MCF 10A (cell line): ENCODE measurements at regions of chr21 and their contacts with region 1.

Region 1: DNA sequence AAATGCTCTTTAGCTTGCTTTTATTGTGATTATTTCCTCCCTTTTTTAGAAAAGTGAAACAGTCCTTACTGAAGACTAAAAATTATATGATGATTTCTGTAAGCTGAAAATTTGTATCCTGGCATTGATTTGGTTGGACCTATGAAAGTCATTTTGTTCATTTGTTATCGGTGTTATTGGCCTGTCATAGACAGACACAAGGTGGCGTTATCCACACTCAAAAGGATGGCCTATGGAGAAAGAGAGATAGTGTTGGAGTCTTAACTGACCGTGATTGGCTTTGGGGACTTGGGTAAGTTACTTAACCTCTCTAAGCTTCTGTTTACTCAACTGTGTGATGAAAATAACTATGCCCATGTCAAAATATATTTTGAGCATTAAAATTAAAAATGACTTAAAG is 203.6 kb upstream of the CHODL start:
- DNase-seq: peak; percentile 73
- H3K4me3 Mint-ChIP-seq: no peak overlapping the region
- H3K27ac Mint-ChIP-seq: no peak overlapping the region
- H3K4me1 Mint-ChIP-seq: no peaks in the 10 kb centered on the region
- H3K27me3 Mint-ChIP-seq: no peaks in the 10 kb centered on the region
- CTCF ChIP-seq: peak; percentile 53

Region 2: GRCh38 chr21:18030248-18030647 is 10.8 kb before region 1 on chr21:
- CTCF ChIA-PET with region 1: interaction called, 14 read pairs
- POLR2A ChIA-PET with region 1: no interaction called
- intact Hi-C with region 1: no loop called
- DNase-seq: peak; percentile 1
- H3K4me3 Mint-ChIP-seq: no peak overlapping the region
- H3K27ac Mint-ChIP-seq: no peak overlapping the region
- H3K4me1 Mint-ChIP-seq: no peaks in the 10 kb centered on the region
- H3K27me3 Mint-ChIP-seq: no peaks in the 10 kb centered on the region
- CTCF ChIP-seq: no peak

Region 3: GRCh38 chr21:18153063-18153462 is 112.1 kb after region 1 on chr21:
- CTCF ChIA-PET with region 1: interaction called, 11 read pairs
- POLR2A ChIA-PET with region 1: interaction called, 3 read pairs
- intact Hi-C with region 1: no loop called
- DNase-seq: peak; percentile 53
- H3K4me3 Mint-ChIP-seq: no peak overlapping the region
- H3K27ac Mint-ChIP-seq: no peak overlapping the region
- H3K4me1 Mint-ChIP-seq: peaks cover 7% of the 10 kb centered on the region
- H3K27me3 Mint-ChIP-seq: no peaks in the 10 kb centered on the region
- CTCF ChIP-seq: no peak

Region 4: DNA sequence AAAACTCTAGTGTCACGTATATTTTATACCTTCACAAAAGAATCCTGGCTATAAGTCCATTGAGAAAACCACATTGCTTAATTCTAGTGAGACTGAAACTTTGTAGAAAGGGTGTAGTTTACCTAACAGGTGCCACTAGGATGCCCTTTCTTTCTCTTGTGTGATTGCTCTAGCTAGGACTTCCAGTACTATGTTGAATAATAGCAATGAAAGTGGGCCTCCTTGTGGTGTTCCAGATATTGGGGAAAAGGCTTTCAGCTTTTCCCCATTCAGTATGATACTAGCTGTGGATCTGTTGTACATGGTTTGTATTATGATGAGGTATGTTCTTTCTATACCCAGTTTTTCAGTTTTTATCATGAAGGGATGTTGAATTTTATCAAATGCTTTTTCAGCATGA is 163.9 kb after region 1 on chr21:
- CTCF ChIA-PET with region 1: interaction called, 4 read pairs
- POLR2A ChIA-PET with region 1: no interaction called
- intact Hi-C with region 1: loop called (anchors 2 kb)
- DNase-seq: peak; percentile 5
- H3K4me3 Mint-ChIP-seq: no peak overlapping the region
- H3K27ac Mint-ChIP-seq: no peak overlapping the region
- H3K4me1 Mint-ChIP-seq: no peaks in the 10 kb centered on the region
- H3K27me3 Mint-ChIP-seq: no peaks in the 10 kb centered on the region
- CTCF ChIP-seq: no peak

Region 5: DNA sequence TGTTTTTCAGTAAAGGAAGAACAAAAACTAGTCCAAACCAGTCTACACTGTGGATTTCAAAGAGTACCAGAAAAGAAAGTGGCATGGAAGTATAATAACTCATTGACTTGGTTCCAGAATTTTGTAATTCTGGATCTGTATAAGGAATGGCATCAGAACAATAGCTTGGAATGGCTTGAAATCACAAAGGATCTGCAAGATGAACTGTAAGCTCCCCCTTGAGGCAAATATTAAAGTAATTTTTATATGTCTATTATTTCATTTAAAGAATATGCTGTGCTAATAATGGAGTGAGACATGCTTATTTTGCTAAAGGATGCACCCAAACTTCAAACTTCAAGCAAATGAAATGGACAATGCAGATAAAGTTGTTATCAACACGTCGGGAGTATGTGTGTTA is 224.9 kb after region 1 on chr21:
- CTCF ChIA-PET with region 1: interaction called, 34 read pairs
- POLR2A ChIA-PET with region 1: no interaction called
- intact Hi-C with region 1: no loop called
- DNase-seq: no peak
- H3K4me3 Mint-ChIP-seq: no peak overlapping the region
- H3K27ac Mint-ChIP-seq: no peak overlapping the region
- H3K4me1 Mint-ChIP-seq: no peaks in the 10 kb centered on the region
- H3K27me3 Mint-ChIP-seq: no peaks in the 10 kb centered on the region
- CTCF ChIP-seq: peak; percentile 31

Region 6: DNA sequence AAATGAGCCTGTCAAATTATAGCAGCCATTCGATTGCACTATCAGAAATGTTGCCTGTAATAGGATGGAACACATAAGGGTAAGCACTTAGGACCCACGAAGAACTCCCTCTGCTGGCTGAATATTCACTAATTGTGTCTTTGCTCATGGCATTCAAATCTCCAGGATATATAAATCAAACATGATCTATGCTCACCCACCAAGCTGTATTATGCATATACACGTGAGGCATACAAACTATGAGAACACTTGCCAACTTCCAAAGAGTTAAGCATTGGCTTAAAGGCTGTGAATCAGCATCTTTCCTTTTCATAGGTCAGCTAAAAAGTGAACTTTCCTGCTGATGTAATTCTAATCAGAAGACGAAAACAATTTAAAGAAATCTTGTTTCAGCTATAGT is 328.1 kb after region 1 on chr21:
- CTCF ChIA-PET with region 1: interaction called, 7 read pairs
- POLR2A ChIA-PET with region 1: interaction called, 3 read pairs
- intact Hi-C with region 1: loop called (anchors 5 kb)
- DNase-seq: peak; percentile 65
- H3K4me3 Mint-ChIP-seq: no peak overlapping the region
- H3K27ac Mint-ChIP-seq: no peak overlapping the region
- H3K4me1 Mint-ChIP-seq: no peaks in the 10 kb centered on the region
- H3K27me3 Mint-ChIP-seq: no peaks in the 10 kb centered on the region
- CTCF ChIP-seq: peak; percentile 20